PC-9 (cell line): ENCODE measurements at regions of chr14 and their contacts with region 1.

Region 1: DNA sequence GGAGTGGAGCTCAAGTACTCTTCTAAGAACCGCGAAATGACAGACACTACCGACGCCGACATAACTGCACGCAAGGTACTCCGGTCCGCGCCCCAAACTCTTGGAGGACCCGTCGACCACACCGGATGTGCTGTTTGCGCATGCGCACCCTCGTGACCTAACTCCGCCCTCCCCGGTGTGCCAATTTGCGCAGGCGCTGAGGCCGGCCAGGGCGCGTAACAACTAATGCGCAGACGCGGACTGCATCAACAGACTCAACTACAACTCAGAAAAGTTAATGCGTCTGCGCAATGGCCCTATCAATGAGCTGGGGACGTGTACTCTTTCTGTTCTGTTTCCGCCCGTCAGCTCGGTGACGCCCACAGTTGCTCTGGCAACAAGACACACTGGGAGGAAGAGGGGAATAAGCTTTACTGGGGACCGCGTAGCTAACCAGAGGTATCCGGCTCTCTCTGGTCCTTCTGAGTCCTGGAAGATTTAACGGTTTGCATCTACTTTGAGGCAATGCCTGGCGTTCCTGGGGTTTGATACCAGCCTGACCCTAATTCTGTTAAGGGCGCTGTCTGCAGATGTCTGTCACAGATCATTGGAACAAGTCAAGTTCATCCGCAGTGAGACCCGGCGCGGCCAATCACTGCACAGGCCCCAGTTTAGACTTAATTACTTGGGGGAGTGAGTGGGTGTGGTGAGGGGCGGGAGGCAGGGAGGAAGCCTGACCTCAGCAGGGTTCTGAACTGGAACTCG is at the start of gene DAD1:
- DNase-seq: peak; percentile 95 to 97
- H3K4me3 ChIP-seq: peak within 1 kb of the TSS; percentile 87
- H3K27ac ChIP-seq: peak within 1 kb of the TSS; percentile 79
- H3K4me1 ChIP-seq: peaks cover 34% of the 10 kb centered on the region
- H3K27me3 ChIP-seq: no peaks in the 10 kb centered on the region
- CTCF ChIP-seq: no peak
- total RNA-seq, gene DAD1: 129 and 155 TPM in 2 replicates

Region 2: DNA sequence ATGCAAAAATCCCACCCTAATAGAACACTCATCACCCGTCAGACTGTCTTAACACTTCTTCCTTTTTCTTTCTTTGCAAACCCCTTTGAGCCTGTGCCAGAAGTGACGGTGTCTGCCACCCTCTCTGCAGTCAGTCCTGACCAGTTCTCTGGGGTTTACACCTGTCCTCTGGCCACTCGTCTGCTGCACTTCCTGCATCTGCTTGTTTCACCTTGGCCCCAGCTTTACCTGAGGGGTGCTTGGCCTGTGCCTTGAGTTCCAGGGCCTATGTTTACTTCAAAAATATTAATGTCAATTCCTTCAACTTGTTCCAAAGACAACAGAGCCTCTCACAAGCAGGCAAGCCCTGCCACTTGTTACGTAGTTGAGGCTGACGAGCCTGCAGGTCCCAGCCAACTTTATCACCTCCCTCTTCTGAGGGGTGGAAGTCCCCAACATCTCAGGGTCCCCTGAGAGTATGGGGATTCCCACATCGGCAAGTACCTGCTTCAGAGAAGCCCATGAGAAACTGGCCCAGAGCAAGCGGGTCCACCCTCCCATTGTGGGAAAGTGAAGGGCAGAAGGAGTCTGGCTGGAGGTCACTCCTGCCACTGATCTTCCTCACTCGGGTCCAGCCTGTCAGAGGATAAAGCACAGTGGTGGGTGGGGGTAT is 205.6 kb before region 1 on chr14:
- CTCF ChIA-PET with region 1: no interaction called
- POLR2A ChIA-PET with region 1: no interaction called
- intact Hi-C with region 1: no loop called
- DNase-seq: no peak
- H3K4me3 ChIP-seq: no peak overlapping the region
- H3K27ac ChIP-seq: no peak overlapping the region
- H3K4me1 ChIP-seq: peaks cover 11% of the 10 kb centered on the region
- H3K27me3 ChIP-seq: no peaks in the 10 kb centered on the region
- CTCF ChIP-seq: no peak

Region 3: GRCh38 chr14:22614224-22614799 is 25.0 kb after region 1 on chr14:
- CTCF ChIA-PET with region 1: no interaction called
- POLR2A ChIA-PET with region 1: interaction called, 6 read pairs
- intact Hi-C with region 1: loop called (anchors 1 kb)
- DNase-seq: peak; percentile 76 to 97
- H3K4me3 ChIP-seq: peak overlapping the region; percentile 22; the same call in 1 of the 2 replicates
- H3K27ac ChIP-seq: peak overlapping the region; percentile 97
- H3K4me1 ChIP-seq: peaks cover 31% of the 10 kb centered on the region
- H3K27me3 ChIP-seq: no peaks in the 10 kb centered on the region
- CTCF ChIP-seq: no peak

Region 4: GRCh38 chr14:22646570-22647254 is 57.4 kb after region 1 on chr14:
- CTCF ChIA-PET with region 1: interaction called, 4 read pairs
- POLR2A ChIA-PET with region 1: interaction called, 16 read pairs
- intact Hi-C with region 1: no loop called
- DNase-seq: peak in 1 of 2 experiments; percentile 82
- H3K4me3 ChIP-seq: no peak overlapping the region; the same call in 1 of the 2 replicates
- H3K27ac ChIP-seq: peak overlapping the region; percentile 100
- H3K4me1 ChIP-seq: peaks cover 65% of the 10 kb centered on the region
- H3K27me3 ChIP-seq: no peaks in the 10 kb centered on the region
- CTCF ChIP-seq: no peak

Region 5: DNA sequence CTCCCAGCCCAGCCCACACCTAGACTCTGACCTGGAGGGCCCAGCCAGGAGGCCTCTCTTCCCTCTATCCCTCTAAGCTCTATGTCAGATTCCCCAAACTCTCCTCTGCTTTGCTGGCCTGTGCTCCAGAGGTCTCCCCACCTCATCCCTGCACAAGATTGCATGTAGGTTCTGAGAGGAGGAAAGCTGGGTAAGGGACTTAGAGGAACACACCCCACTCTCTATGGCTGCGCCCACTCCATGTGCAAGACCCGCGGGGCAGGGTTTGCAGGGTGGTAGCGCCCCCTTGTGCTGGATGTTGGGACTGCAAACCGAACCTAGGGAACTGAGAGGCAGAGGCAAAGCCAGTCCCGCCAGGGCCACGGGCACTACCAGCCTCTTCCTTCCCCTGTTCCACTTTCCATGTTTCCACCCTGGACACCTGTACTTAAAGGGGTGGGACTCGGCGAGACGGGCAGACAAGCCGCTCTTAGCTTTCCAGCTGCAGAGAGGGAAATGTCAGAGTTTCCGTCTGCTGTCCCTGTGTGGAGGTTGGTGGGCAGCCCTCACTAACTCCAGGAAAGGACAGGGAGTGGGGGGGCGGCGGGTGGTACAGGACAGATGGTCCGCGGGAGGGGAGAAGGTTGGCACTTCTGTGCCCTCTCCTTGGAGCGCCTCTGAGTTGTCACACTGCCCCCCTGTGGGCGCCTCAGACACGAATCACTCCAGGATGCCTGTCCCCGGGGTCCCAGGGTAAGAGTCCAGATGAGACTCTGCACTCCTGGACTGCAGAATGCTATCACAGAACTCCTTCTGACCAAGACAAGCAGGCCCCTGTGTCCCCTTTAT is 263.9 kb after region 1 on chr14:
- CTCF ChIA-PET with region 1: interaction called, 14 read pairs
- POLR2A ChIA-PET with region 1: no interaction called
- intact Hi-C with region 1: no loop called
- DNase-seq: peak in 1 of 2 experiments; percentile 80
- H3K4me3 ChIP-seq: peak overlapping the region; percentile 48; the same call in 1 of the 2 replicates
- H3K27ac ChIP-seq: no peak overlapping the region
- H3K4me1 ChIP-seq: peaks cover 4% of the 10 kb centered on the region; the same call in 1 of the 2 replicates
- H3K27me3 ChIP-seq: no peaks in the 10 kb centered on the region
- CTCF ChIP-seq: peak; percentile 91